Activated B cell treated with CpG ODN at 0.5 μM for 24 hours (primary cell): ENCODE measurements at regions of chr3 and their contacts with region 1.

Region 1: GRCh38 chr3:168738527-168739325 is 643.0 kb upstream of the GOLIM4 start:
- DNase-seq: no peak
- ATAC-seq: no peak
- H3K4me3 Mint-ChIP-seq: no peak overlapping the region
- H3K27ac Mint-ChIP-seq: no peak overlapping the region
- H3K4me1 Mint-ChIP-seq: no peaks in the 10 kb centered on the region
- H3K27me3 Mint-ChIP-seq: no peaks in the 10 kb centered on the region
- CTCF ChIP-seq: no peak

Region 2: DNA sequence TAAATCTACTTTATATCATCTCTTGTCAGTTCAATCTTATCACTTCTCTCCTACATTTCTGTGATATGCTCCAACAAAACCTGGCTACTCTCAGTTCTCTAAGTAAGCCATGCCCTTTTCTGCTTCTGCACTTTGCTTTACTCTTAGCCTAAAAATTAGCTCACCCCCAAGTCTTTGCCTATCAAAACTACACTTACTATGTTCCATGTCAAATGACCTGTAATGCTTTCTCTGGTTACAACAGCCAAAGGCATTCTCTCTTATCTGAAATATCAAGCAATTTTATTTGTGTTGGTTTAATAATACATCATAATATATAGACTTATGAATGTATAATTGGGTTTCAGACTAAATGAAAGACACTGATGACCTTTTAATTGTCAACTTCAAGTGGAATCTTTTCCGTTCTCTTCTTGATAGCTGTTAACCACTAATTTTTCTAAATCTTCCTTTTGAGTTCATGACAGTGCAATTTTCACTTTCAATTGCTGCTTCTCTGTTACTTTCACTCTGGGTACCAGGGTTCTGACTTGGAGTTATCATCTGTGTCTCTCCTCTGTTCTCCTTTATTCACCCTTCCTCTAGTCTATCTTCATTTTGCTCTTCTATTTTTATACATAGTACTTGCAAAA is 24.0 kb before region 1 on chr3:
- CTCF ChIA-PET with region 1: no interaction called
- POLR2A ChIA-PET with region 1: no interaction called
- intact Hi-C with region 1: no loop called
- DNase-seq: no peak
- ATAC-seq: no peak
- H3K4me3 Mint-ChIP-seq: no peak overlapping the region
- H3K27ac Mint-ChIP-seq: no peak overlapping the region
- H3K4me1 Mint-ChIP-seq: no peaks in the 10 kb centered on the region
- H3K27me3 Mint-ChIP-seq: no peaks in the 10 kb centered on the region
- CTCF ChIP-seq: no peak

Region 3: DNA sequence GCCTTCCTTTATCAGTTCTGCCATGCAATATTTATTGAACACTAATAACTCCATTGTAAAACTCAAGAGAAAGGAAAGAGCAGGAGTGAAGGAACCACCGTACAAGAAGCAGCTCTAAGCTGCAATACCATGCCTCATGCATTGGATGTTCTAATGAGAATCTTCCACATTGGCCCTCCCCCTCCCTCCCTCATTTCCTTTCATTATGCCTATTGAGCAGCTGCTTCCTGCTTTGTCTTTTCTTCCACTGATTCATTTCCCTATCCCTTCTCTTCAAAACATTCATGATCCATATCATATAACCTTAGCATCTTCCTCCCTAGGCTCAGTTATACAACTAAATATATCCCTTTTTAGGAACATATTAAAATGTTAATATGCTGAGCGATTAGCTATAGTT is 55.7 kb after region 1 on chr3:
- CTCF ChIA-PET with region 1: no interaction called
- POLR2A ChIA-PET with region 1: no interaction called
- intact Hi-C with region 1: loop called (anchors 5 kb)
- DNase-seq: no peak
- ATAC-seq: no peak
- H3K4me3 Mint-ChIP-seq: no peak overlapping the region
- H3K27ac Mint-ChIP-seq: no peak overlapping the region
- H3K4me1 Mint-ChIP-seq: no peaks in the 10 kb centered on the region
- H3K27me3 Mint-ChIP-seq: no peaks in the 10 kb centered on the region
- CTCF ChIP-seq: no peak